Caco-2 (cell line): ENCODE measurements at regions of chr12 and their contacts with region 1.

Region 1: GRCh38 chr12:18970603-18971002 is 158.9 kb upstream of the PLEKHA5 start:
- DNase-seq: no peak
- H3K4me3 ChIP-seq: no peak overlapping the region
- H3K4me3 Mint-ChIP-seq: no peak overlapping the region
- H3K27ac Mint-ChIP-seq: no peak overlapping the region
- H3K4me1 ChIP-seq: 0 out of 2 replicates have a peak, but pooled peaks cover under 1% of the 10 kb centered on the region
- H3K4me1 Mint-ChIP-seq: no peaks in the 10 kb centered on the region
- H3K27me3 ChIP-seq: no peaks in the 10 kb centered on the region
- H3K27me3 Mint-ChIP-seq: no peaks in the 10 kb centered on the region
- CTCF ChIP-seq: no peak

Region 2: GRCh38 chr12:18908191-18908590 is 62.4 kb before region 1 on chr12:
- CTCF ChIA-PET with region 1: no interaction called
- POLR2A ChIA-PET with region 1: no interaction called
- intact Hi-C with region 1: no loop called
- DNase-seq: no peak
- H3K4me3 ChIP-seq: no peak overlapping the region
- H3K4me3 Mint-ChIP-seq: no peak overlapping the region
- H3K27ac Mint-ChIP-seq: no peak overlapping the region
- H3K4me1 ChIP-seq: no peaks in the 10 kb centered on the region
- H3K4me1 Mint-ChIP-seq: no peaks in the 10 kb centered on the region
- H3K27me3 ChIP-seq: no peaks in the 10 kb centered on the region
- H3K27me3 Mint-ChIP-seq: no peaks in the 10 kb centered on the region
- CTCF ChIP-seq: no peak

Region 3: DNA sequence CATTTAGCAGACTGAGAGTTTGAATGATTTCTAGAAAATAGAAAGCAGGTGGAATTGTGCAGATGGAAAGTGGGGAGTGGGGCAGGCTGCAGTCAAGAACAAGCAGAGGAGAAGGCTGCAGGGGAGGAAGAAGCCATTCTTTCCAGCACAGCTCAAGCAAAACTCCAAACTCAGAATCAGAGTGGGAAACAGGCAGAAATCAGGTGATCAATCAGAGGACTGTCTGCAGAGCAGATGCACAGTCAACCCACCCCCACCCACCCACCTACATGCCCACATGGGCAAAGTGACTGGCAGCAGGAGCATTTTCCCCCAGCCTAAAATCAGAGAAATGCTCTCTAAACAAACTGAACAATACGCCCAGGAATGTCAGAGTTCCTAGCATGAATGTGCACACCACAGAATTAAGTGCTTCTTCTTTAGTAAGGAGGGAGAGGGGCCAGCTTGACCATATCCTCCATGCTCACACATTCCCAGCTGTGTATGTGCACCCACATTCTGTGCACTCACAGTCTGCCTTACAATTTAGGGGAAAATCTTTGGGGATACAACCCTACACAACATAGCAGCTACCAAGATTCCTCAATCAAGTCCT is 35.1 kb before region 1 on chr12:
- CTCF ChIA-PET with region 1: no interaction called
- POLR2A ChIA-PET with region 1: no interaction called
- intact Hi-C with region 1: no loop called
- DNase-seq: no peak
- H3K4me3 ChIP-seq: no peak overlapping the region
- H3K4me3 Mint-ChIP-seq: no peak overlapping the region
- H3K27ac Mint-ChIP-seq: no peak overlapping the region
- H3K4me1 ChIP-seq: no peaks in the 10 kb centered on the region
- H3K4me1 Mint-ChIP-seq: no peaks in the 10 kb centered on the region
- H3K27me3 ChIP-seq: no peaks in the 10 kb centered on the region
- H3K27me3 Mint-ChIP-seq: no peaks in the 10 kb centered on the region
- CTCF ChIP-seq: no peak

Region 4: GRCh38 chr12:18990856-18991255 is 20.3 kb after region 1 on chr12:
- CTCF ChIA-PET with region 1: no interaction called
- POLR2A ChIA-PET with region 1: no interaction called
- intact Hi-C with region 1: no loop called
- DNase-seq: no peak
- H3K4me3 ChIP-seq: no peak overlapping the region
- H3K4me3 Mint-ChIP-seq: no peak overlapping the region
- H3K27ac Mint-ChIP-seq: no peak overlapping the region
- H3K4me1 ChIP-seq: no peaks in the 10 kb centered on the region
- H3K4me1 Mint-ChIP-seq: peaks cover 4% of the 10 kb centered on the region
- H3K27me3 ChIP-seq: no peaks in the 10 kb centered on the region
- H3K27me3 Mint-ChIP-seq: no peaks in the 10 kb centered on the region
- CTCF ChIP-seq: no peak

Region 5: GRCh38 chr12:19014240-19014639 is 43.6 kb after region 1 on chr12:
- CTCF ChIA-PET with region 1: no interaction called
- POLR2A ChIA-PET with region 1: interaction called, 14 read pairs
- intact Hi-C with region 1: no loop called
- DNase-seq: no peak
- H3K4me3 ChIP-seq: no peak overlapping the region
- H3K4me3 Mint-ChIP-seq: no peak overlapping the region
- H3K27ac Mint-ChIP-seq: no peak overlapping the region
- H3K4me1 ChIP-seq: peaks cover 17% of the 10 kb centered on the region
- H3K4me1 Mint-ChIP-seq: peaks cover 29% of the 10 kb centered on the region
- H3K27me3 ChIP-seq: no peaks in the 10 kb centered on the region
- H3K27me3 Mint-ChIP-seq: no peaks in the 10 kb centered on the region
- CTCF ChIP-seq: no peak